CD4-positive, alpha-beta memory T cell (primary cell): ENCODE measurements at regions of chr19 and their contacts with region 1.

Region 1: DNA sequence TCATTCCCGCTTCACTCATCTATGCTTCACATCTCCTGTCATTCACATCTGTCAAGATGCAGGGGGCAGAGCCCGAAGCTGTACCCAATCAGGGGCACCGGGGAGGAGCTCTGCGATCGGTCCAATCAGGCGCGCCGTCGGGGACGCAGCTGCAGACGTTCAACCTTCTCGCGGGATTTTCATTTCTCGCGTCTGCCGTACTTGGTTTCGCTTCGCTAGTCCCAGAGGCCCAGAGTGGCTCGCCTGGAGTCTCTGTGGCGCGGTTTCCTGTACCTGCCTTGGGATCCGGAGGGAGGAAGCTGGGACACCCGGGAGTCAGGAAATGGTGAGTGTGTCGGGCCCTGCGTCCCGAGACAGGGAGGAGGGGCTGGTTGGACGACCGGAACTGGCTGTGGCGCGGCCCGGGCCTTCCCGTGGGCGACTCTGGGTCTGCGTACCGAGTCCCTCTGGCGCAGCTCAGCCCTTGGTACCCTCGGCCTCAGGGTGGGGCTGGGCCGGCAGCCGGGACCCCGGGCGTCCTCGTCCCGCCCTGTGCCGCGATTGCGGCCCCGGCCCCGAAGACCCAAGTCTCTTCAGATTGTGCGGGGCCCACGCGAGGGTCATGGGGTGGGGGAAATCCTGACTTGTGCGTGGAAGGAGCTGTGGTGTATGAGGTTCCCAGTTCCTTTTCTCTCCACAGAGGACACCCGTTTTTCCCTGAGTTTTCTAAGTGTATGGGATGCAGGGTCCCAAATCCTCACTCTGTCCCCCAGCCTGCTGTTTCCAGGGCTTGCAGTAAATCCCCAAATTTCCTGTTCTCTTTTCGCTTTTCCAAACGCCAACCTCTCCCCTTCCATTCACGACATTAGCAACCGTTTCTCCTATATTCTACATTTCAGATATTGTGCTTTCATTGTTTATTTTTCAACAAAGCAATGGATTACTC is at the start of gene ZNF136:
- DNase-seq: peak; percentile 90 to 96 (median 92)
- H3K4me3 ChIP-seq: peak within 1 kb of the TSS; percentile 65 to 74
- H3K4me3 Mint-ChIP-seq: peak within 1 kb of the TSS; percentile 95 to 99 (median 98)
- H3K27ac ChIP-seq: peak within 1 kb of the TSS; percentile 98
- H3K27ac Mint-ChIP-seq: peak within 1 kb of the TSS; percentile 92 to 99 (median 99)
- H3K4me1 ChIP-seq: peaks cover 36% of the 10 kb centered on the region
- H3K4me1 Mint-ChIP-seq: peaks cover 32 to 56% (median 40%) of the 10 kb centered on the region in 4 donors
- H3K27me3 ChIP-seq: no peaks in the 10 kb centered on the region
- H3K27me3 Mint-ChIP-seq: no peaks in the 10 kb centered on the region
- total RNA-seq, gene ZNF136: 26.9 to 32.8 TPM

Region 2: DNA sequence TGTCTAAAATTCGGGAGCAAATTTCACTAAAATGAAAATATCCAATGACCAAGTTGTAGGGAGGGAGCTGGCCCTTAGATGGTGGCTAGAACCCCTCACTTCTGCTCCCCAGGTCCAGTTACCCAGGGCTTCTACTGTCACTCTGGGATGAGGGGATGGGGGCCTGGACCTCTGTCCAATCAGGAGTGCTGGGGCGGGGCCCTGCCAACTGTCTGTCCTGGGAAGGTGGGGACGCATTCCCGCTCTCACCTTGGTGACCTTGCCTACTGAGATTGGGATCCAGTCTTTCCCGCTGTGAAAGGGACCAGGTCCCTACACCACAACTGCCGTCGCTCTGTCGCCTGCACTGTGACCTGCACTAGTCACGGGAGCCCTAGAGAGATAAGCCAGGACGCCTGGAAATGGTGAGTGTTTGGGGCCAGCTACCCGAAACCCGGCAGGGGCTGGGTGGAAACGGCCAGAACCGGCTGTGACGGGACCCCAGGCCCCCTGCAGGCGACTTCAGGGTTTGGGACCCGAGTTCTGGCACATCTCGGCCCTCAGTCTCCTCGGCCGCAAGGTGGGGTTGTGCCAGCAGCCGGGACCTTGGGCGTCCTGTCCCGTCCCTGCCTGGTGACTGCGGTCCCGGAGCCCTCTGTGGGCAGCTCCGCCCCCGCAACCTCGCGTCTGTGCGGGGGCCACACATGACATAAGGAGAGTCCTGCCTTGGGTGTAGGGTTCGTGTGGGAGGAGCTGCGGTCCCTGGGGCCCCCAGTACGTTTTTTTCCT is 45.8 kb before region 1 on chr19:
- CTCF ChIA-PET with region 1: no interaction called
- POLR2A ChIA-PET with region 1: no interaction called
- intact Hi-C with region 1: no loop called
- DNase-seq: no peak
- H3K4me3 ChIP-seq: no peak overlapping the region
- H3K4me3 Mint-ChIP-seq: no peak overlapping the region
- H3K27ac ChIP-seq: no peak overlapping the region
- H3K27ac Mint-ChIP-seq: no peak overlapping the region
- H3K4me1 ChIP-seq: no peaks in the 10 kb centered on the region
- H3K4me1 Mint-ChIP-seq: no peaks in the 10 kb centered on the region
- H3K27me3 ChIP-seq: no peaks in the 10 kb centered on the region
- H3K27me3 Mint-ChIP-seq: no peaks in the 10 kb centered on the region

Region 3: DNA sequence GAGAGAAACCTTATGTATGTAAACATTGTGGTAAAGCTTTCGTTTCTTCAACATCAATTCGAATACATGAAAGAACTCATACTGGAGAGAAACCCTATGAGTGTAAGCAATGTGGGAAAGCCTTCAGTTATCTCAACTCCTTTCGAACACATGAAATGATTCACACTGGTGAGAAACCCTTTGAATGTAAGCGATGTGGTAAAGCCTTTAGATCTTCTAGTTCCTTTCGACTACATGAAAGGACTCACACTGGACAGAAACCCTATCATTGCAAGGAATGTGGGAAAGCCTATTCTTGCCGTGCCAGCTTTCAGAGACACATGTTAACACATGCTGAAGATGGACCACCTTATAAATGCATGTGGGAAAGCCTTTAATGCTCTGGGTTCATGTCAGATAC is 24.5 kb after region 1 on chr19:
- CTCF ChIA-PET with region 1: no interaction called
- POLR2A ChIA-PET with region 1: no interaction called
- intact Hi-C with region 1: no loop called
- DNase-seq: no peak
- H3K4me3 ChIP-seq: peak overlapping the region in 1 of 2 donors; percentile 26
- H3K4me3 Mint-ChIP-seq: no peak overlapping the region
- H3K27ac ChIP-seq: no peak overlapping the region
- H3K27ac Mint-ChIP-seq: peak overlapping the region in 1 of 7 donors; percentile 11
- H3K4me1 ChIP-seq: no peaks in the 10 kb centered on the region
- H3K4me1 Mint-ChIP-seq: peaks cover 0 to 5% (median 0%) of the 10 kb centered on the region in 4 donors
- H3K27me3 ChIP-seq: no peaks in the 10 kb centered on the region
- H3K27me3 Mint-ChIP-seq: no peaks in the 10 kb centered on the region

Region 4: GRCh38 chr19:12287958-12288500 is 124.9 kb after region 1 on chr19:
- CTCF ChIA-PET with region 1: no interaction called
- POLR2A ChIA-PET with region 1: interaction called, 12 read pairs
- intact Hi-C with region 1: no loop called
- DNase-seq: no peak
- H3K4me3 ChIP-seq: no peak overlapping the region
- H3K4me3 Mint-ChIP-seq: peak overlapping the region in 3 of 8 donors; percentile 8 to 36 (median 13)
- H3K27ac ChIP-seq: peak overlapping the region; percentile 43
- H3K27ac Mint-ChIP-seq: peak overlapping the region; percentile 42 to 97 (median 81)
- H3K4me1 ChIP-seq: peaks cover 53% of the 10 kb centered on the region
- H3K4me1 Mint-ChIP-seq: peaks cover 33 to 63% (median 43%) of the 10 kb centered on the region in 4 donors
- H3K27me3 ChIP-seq: no peaks in the 10 kb centered on the region
- H3K27me3 Mint-ChIP-seq: no peaks in the 10 kb centered on the region

Region 5: DNA sequence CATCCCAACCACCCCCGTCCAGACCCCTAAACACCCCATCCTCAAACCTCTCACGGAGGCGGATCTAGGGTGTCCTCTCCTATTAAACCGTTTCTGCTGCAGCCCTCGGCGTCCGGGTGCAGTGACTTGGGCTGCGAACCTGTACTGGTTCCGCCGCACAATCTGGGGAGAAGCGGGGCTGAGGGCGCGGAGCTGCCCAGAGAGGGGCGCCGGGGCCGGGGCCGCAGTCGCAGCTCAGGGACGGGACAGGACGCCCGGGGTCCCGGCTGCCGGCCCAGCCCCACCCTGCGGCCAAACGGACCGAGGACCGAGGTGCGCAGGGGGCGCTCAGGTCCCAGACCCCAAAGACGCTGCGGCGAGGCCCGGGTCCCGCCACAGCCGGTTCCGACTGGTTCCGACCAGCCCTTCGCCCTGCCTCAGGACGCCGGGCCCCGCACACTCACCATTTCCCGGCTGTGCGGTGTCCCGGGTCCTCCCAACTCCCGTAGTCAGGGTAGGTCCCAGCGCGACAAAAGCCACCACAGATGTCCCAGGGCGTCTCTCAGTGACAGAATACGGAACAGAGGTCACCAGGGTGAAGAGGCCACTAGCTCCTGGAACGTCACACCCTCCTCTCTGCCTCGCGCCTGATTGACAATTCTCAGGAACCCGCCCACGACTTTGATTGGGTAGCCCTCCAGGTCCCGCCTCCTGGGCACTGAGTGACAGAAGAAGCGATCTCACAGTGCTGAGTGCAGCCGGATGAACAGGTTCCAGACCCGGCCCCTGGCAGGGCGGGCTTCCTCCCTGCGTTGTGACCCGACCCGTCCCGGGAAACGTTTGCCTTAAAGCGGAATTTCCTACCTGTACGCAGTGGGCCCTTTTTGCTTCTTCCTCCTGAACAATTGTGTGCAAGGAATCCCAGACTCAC is 131.4 kb after region 1 on chr19 and contains the start of gene ZNF44:
- CTCF ChIA-PET with region 1: interaction called, 5 read pairs
- POLR2A ChIA-PET with region 1: interaction called, 12 read pairs
- intact Hi-C with region 1: loop called (anchors 2 kb)
- DNase-seq: peak; percentile 93 to 97 (median 94)
- H3K4me3 ChIP-seq: peak within 1 kb of the TSS; percentile 73 to 79
- H3K4me3 Mint-ChIP-seq: peak within 1 kb of the TSS; percentile 99 to 100 (median 99)
- H3K27ac ChIP-seq: peak within 1 kb of the TSS; percentile 80
- H3K27ac Mint-ChIP-seq: peak within 1 kb of the TSS; percentile 97 to 100 (median 99)
- H3K4me1 ChIP-seq: peaks cover 37% of the 10 kb centered on the region
- H3K4me1 Mint-ChIP-seq: peaks cover 26 to 44% (median 36%) of the 10 kb centered on the region in 4 donors
- H3K27me3 ChIP-seq: no peaks in the 10 kb centered on the region
- H3K27me3 Mint-ChIP-seq: no peaks in the 10 kb centered on the region
- total RNA-seq, gene ZNF44: 62.2 TPM